ENCODE measurements at regions of chr5 and their contacts with region 1.

Region 1: DNA sequence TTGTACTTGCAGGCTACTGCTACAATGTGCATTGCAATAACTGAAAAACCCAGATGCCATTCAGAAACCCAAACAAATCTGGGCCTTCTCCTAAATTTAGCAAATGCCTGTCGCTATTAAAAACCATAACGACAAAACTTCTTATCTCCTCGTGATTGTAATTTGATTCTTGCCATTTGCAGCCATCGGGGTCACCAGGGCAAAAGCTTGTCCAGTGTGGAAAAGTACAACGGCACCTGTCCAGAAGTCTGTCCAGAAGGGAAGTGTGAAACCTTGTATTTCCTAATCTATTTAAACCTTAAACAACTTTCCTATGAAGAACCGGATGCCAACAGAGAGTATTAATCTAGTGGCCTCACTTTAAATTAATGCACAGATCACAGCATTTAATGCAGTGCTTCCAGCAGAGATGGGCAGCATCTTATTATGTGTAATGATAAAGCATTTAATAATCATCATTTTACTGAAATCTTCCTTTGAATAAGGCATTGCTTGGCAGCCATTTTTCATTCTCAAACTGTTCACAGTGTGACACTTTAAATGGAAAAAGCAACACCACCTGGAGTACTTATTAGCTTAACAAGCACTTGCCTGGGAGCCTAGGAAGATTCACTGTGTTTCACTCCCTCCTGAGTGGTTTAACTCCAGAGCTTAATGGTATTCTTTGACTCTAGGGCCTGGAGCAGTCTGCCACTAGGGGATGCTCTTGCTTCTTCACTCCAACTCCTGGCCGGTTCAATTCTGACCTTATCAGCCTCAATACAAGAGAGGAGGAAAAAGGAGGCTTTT is 4.9 kb upstream of the C7 start:
- DNase-seq: peak in 4 of 5 donors; percentile 63 to 67 (median 66)
- ATAC-seq: peak; percentile 93 to 96 (median 95)
- H3K4me3 ChIP-seq: no peak overlapping the region
- H3K27ac ChIP-seq: peak overlapping the region; percentile 23 to 69 (median 50)
- H3K4me1 ChIP-seq: peaks cover 0 to 20% (median 9%) of the 10 kb centered on the region in 12 donors
- H3K27me3 ChIP-seq: no peaks in the 10 kb centered on the region
- CTCF ChIP-seq: peak; percentile 75 to 97 (median 94)
- POLR2A ChIP-seq: no peak

Region 2: GRCh38 chr5:41172012-41172411 is 267.6 kb after region 1 on chr5:
- intact Hi-C with region 1: no loop called
- DNase-seq: no peak
- ATAC-seq: peak in 3 of 4 donors; percentile 49 to 62 (median 62)
- H3K4me3 ChIP-seq: no peak overlapping the region
- H3K27ac ChIP-seq: no peak overlapping the region
- H3K4me1 ChIP-seq: peaks cover 0 to 3% (median 0%) of the 10 kb centered on the region in 12 donors
- H3K27me3 ChIP-seq: no peaks in the 10 kb centered on the region
- CTCF ChIP-seq: no peak
- POLR2A ChIP-seq: no peak

Region 3: DNA sequence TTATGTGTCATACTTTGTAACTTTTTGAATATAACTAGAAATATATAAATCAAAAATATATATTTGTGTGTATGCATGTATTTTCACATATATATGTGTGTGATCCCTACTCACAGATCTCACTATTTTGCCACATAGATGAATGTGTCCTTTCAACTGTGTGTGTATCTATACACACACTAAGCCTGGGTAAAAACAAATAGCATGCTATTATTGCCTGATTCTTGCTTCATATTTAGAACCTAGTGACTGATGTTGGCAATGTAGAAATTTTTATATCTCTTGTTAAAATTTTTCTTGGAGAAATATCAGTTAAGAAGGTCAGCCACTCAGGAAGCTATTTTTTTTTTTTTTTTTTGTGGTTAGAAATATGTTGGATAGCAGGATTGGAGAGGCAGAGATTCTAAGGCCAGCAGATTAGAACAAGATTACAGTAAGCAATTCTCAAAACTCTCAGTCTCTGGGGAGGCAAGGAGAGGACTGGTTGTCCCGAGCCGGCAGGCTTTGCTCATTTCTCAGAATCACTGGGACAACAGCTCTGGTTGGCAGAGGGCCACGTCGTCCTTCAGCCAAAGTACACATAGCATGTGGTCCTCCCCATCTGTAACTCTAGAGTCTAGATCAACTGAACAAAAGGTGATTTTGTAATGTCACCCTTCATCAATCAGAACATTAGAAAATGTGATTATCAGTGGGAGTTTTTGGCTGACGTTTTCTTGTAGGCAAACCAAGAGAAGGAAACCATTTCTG is 289.2 kb after region 1 on chr5:
- intact Hi-C with region 1: loop called in 5 of 10 experiments (anchors 5 to 10 kb)
- DNase-seq: peak; percentile 94 to 99 (median 97)
- ATAC-seq: peak; percentile 96 to 98 (median 97)
- H3K4me3 ChIP-seq: no peak overlapping the region
- H3K27ac ChIP-seq: peak overlapping the region; percentile 58 to 85 (median 78)
- H3K4me1 ChIP-seq: peaks cover 0 to 30% (median 16%) of the 10 kb centered on the region in 12 donors
- H3K27me3 ChIP-seq: no peaks in the 10 kb centered on the region
- CTCF ChIP-seq: no peak
- POLR2A ChIP-seq: no peak

Region 4: GRCh38 chr5:41346609-41347008 is 442.2 kb after region 1 on chr5:
- intact Hi-C with region 1: loop called in 3 of 10 experiments (anchors 10 kb)
- DNase-seq: no peak
- ATAC-seq: no peak
- H3K4me3 ChIP-seq: no peak overlapping the region
- H3K27ac ChIP-seq: no peak overlapping the region
- H3K4me1 ChIP-seq: peaks cover 0 to 60% (median 19%) of the 10 kb centered on the region in 12 donors
- H3K27me3 ChIP-seq: no peaks in the 10 kb centered on the region
- CTCF ChIP-seq: no peak
- POLR2A ChIP-seq: no peak

Region 5: GRCh38 chr5:41539454-41539853 is 635.1 kb after region 1 on chr5:
- intact Hi-C with region 1: loop called in 1 of 10 experiments (anchors 10 kb)
- DNase-seq: no peak
- ATAC-seq: peak; percentile 68 to 79 (median 74)
- H3K4me3 ChIP-seq: no peak overlapping the region
- H3K27ac ChIP-seq: no peak overlapping the region
- H3K4me1 ChIP-seq: peaks cover 0 to 10% (median 0%) of the 10 kb centered on the region in 12 donors
- H3K27me3 ChIP-seq: no peaks in the 10 kb centered on the region
- CTCF ChIP-seq: peak in 7 of 12 donors; percentile 10 to 45 (median 17)
- POLR2A ChIP-seq: no peak

Region 6: DNA sequence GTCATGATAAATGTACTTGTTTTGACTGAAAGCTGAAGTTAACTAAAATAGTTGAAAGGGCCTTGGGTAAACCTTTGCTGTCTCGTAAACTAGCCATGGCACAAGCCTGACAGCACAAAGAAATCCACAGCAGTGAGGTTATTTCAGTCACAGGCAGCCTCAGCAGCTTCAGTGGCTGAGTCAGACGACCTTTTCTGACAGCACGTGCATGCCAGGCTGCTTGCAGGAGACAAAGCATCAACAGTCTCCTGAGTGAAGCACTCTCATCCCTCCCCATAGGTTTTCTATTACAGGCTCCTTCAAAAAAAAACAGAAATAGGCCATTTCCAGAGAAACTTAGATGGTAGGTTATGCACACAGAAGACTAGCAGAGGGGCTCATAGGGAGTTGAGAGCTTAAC is 931.2 kb after region 1 on chr5:
- intact Hi-C with region 1: loop called in 7 of 10 experiments (anchors 5 to 10 kb)
- DNase-seq: peak; percentile 55 to 84 (median 64)
- ATAC-seq: peak; percentile 94 to 97 (median 96)
- H3K4me3 ChIP-seq: no peak overlapping the region
- H3K27ac ChIP-seq: peak overlapping the region in 11 of 12 donors; percentile 1 to 85 (median 65)
- H3K4me1 ChIP-seq: peaks cover 0 to 28% (median 15%) of the 10 kb centered on the region in 12 donors
- H3K27me3 ChIP-seq: no peaks in the 10 kb centered on the region
- CTCF ChIP-seq: no peak
- POLR2A ChIP-seq: no peak

Measured in heart left ventricle (tissue), 16 donors.